Right ventricle myocardium inferior (tissue), 1 donor: ENCODE measurements at regions of chr11 and their contacts with region 1.

Region 1: DNA sequence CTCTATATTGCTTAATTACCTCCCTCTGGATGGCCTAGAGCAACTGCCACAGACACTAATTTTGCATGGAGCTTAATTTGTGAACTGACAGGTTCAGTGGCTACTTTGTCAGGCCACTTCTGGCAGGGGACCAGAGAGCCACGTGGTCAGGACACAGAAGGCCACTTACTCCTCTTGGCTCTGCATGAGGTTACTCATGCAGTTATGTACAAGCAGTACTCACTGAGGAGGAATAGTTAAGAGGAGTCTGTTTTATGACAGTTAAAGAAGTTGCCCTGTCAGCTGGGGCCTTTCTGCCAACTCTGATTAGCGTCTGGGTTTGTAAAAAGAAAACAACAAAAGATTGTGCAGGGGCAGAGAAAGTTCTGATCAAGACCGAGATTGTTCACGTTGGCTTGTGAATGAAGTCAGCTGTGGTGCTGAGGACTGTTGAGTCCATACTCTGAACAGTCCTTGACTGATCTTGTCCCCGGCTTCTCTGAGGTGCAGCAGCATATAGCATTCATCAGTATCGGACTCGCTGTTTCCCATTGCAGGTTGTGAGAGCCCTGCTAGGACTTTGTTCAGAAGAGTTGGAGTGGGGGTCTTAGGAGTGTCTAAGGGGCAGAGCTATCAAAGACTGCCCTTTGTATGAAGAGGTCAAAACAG is 41.4 kb downstream of the PPFIBP2 start:
- DNase-seq: peak; percentile 84
- ATAC-seq: peak; percentile 89

Region 2: GRCh38 chr11:7513234-7514098 is 41.7 kb before region 1 on chr11 and contains the start of gene PPFIBP2:
- intact Hi-C with region 1: loop called (anchors 5 kb)
- DNase-seq: peak; percentile 93
- ATAC-seq: peak; percentile 93
- total RNA-seq, gene PPFIBP2: 21.4 TPM

Region 3: DNA sequence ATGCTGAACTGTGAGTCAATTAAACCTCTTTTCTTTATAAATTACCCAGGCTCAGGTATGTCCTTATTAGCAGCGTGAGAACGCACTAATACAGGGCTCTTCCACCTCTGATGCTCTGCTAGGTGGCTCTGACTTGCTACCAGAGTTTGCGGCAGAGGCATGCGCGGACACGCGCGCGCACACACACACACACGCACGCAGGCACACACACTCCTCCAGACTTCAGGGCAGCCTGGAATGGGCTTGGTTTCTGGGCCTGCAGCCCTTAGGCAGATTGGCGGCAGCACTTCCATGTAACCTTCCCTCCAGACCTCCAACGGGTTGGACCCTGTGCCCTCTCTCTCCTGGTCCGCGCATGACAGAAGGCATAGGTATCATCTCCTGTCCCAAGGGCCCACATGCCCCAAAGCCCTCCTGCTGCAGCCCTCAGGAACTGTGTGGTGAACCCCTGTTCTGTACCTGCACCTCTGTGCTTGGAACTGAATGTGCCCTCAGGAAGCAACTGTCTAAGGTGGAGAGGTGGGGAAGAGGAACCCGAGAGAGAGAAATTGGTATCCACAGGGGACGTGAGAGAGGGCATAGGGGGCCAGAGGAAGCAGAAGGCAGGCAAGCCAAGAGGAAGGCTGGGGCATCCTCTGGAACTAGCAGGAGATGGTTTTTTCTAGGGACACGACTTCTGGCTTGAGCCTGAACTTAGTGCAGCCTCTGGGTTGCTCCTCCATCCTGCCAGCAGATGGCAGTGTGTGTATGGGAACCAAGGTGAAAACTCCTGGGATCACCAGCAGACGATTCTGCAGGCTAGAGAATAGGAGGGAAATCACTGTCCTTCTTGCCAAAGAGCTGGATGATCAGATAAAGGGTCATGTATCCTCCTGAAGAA is 637.1 kb after region 1 on chr11:
- intact Hi-C with region 1: no loop called
- DNase-seq: no peak
- ATAC-seq: peak; percentile 74